Right lobe of liver (tissue), 6 donors: ENCODE measurements at regions of chr7 and their contacts with region 1.

Region 1: GRCh38 chr7:37899712-37900247 is 16.8 kb downstream of the SFRP4 start:
- DNase-seq: no peak
- ATAC-seq: no peak
- H3K4me3 ChIP-seq: no peak overlapping the region
- H3K27ac ChIP-seq: no peak overlapping the region
- H3K4me1 ChIP-seq: peaks cover 0 to 15% (median 7%) of the 10 kb centered on the region in 4 donors
- H3K27me3 ChIP-seq: no peaks in the 10 kb centered on the region
- CTCF ChIP-seq: no peak
- POLR2A ChIP-seq: no peak

Region 2: DNA sequence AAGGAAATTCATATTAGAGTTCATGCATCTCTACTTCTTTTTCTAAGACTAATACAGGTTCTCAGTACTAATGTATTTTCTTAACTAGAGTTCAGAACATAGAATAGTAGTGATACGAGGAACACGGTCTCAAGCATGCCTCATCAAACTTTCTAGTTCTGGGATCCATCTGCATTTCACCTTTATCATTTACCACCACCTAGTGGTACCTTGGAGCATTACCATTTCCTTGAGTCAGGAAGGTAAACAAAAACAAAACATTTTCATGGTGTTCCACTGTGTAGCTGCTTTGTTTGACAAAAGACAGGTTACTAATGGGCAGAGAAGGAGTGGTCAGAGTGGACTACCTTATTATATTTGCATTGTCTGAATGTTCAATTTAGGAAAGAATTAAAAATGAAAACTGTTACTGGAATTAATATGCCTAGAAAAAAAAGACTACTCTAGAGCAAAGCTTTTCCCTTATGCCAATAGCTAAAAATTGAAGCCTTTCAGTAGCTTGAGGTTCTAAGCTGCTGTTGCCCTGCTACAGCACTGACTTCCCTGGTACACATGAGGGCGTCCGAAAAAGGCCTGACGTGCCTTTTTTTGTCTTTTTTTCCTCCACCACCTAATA is 322.8 kb after region 1 on chr7:
- intact Hi-C with region 1: loop called in 1 of 2 experiments (anchors 10 kb)
- DNase-seq: no peak
- ATAC-seq: peak; percentile 91 to 97 (median 92)
- H3K4me3 ChIP-seq: no peak overlapping the region
- H3K27ac ChIP-seq: no peak overlapping the region
- H3K4me1 ChIP-seq: no peaks in the 10 kb centered on the region
- H3K27me3 ChIP-seq: no peaks in the 10 kb centered on the region
- CTCF ChIP-seq: peak; percentile 88 to 93 (median 91)
- POLR2A ChIP-seq: no peak